CD4-positive, alpha-beta T cell (primary cell): ENCODE measurements at regions of chr17 and their contacts with region 1.

Region 1: GRCh38 chr17:40139566-40140058 is 725 bp upstream of the CASC3 start:
- DNase-seq: peak in 2 of 14 experiments; percentile 4
- ATAC-seq: peak; percentile 21
- H3K4me3 ChIP-seq: peak overlapping the region; percentile 59
- H3K4me3 Mint-ChIP-seq: peak overlapping the region; percentile 95
- H3K27ac ChIP-seq: peak overlapping the region; percentile 91 to 93
- H3K27ac Mint-ChIP-seq: peak overlapping the region; percentile 99
- H3K4me1 ChIP-seq: peaks cover 38% of the 10 kb centered on the region
- H3K4me1 Mint-ChIP-seq: peaks cover 46% of the 10 kb centered on the region
- H3K27me3 ChIP-seq: no peaks in the 10 kb centered on the region
- H3K27me3 Mint-ChIP-seq: peaks cover 5% of the 10 kb centered on the region
- CTCF ChIP-seq: no peak

Region 2: DNA sequence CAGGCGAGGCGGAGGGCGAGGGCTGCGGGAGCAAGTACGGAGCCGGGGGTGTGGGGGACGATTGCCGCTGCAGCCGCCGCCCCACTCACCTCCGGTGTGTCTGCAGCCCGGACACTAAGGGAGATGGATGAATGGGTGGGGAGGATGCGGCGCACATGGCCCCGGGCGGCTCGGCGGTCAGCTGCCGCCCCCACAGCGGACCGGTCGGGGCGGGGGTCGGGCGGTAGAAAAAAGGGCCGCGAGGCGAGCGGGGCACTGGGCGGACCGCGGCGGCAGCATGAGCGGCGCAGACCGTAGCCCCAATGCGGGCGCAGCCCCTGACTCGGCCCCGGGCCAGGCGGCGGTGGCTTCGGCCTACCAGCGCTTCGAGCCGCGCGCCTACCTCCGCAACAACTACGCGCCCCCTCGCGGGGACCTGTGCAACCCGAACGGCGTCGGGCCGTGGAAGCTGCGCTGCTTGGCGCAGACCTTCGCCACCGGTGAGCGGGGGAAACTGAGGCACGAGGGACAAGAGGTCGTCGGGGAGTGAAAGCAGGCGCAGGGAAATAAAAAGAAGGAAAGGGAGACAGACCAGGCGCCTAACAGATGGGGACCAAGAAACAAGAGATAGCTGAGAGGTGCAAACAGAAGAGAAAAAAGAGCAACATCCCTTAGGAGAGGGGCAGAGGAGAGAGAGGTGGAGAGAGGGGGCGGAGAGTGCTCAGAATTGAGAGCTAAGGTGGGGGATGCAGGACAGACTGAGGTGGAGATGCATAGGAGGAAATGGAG is 471.2 kb before region 1 on chr17 and contains the start of gene PNMT:
- CTCF ChIA-PET with region 1: no interaction called
- POLR2A ChIA-PET with region 1: no interaction called
- intact Hi-C with region 1: no loop called
- DNase-seq: peak; percentile 42 to 85 (median 62)
- ATAC-seq: peak; percentile 80
- H3K4me3 ChIP-seq: peak within 1 kb of the TSS; percentile 32
- H3K4me3 Mint-ChIP-seq: peak within 1 kb of the TSS; percentile 59
- H3K27ac ChIP-seq: no peak within 1 kb of the TSS
- H3K27ac Mint-ChIP-seq: no peak within 1 kb of the TSS
- H3K4me1 ChIP-seq: peaks cover 35% of the 10 kb centered on the region
- H3K4me1 Mint-ChIP-seq: peaks cover 15% of the 10 kb centered on the region
- H3K27me3 ChIP-seq: peaks cover 15 to 34% of the 10 kb centered on the region in 2 experiments
- H3K27me3 Mint-ChIP-seq: peaks cover 34% of the 10 kb centered on the region
- CTCF ChIP-seq: peak; percentile 78
- total RNA-seq, gene PNMT: 0.47 TPM in 1 of 2 experiments, not detected in the other

Region 3: GRCh38 chr17:39980351-39981206 is 159.0 kb before region 1 on chr17 and contains the start of gene PSMD3:
- CTCF ChIA-PET with region 1: no interaction called
- POLR2A ChIA-PET with region 1: interaction called, 11 read pairs
- intact Hi-C with region 1: no loop called
- DNase-seq: peak; percentile 95 to 100 (median 98)
- ATAC-seq: peak; percentile 94
- H3K4me3 ChIP-seq: peak within 1 kb of the TSS; percentile 96
- H3K4me3 Mint-ChIP-seq: peak within 1 kb of the TSS; percentile 89
- H3K27ac ChIP-seq: peak within 1 kb of the TSS; percentile 89 to 97
- H3K27ac Mint-ChIP-seq: peak within 1 kb of the TSS; percentile 95
- H3K4me1 ChIP-seq: peaks cover 25% of the 10 kb centered on the region
- H3K4me1 Mint-ChIP-seq: peaks cover 39% of the 10 kb centered on the region
- H3K27me3 ChIP-seq: no peaks in the 10 kb centered on the region
- H3K27me3 Mint-ChIP-seq: no peaks in the 10 kb centered on the region
- CTCF ChIP-seq: peak; percentile 70
- total RNA-seq, gene PSMD3: 66.7 to 71.9 TPM

Region 4: DNA sequence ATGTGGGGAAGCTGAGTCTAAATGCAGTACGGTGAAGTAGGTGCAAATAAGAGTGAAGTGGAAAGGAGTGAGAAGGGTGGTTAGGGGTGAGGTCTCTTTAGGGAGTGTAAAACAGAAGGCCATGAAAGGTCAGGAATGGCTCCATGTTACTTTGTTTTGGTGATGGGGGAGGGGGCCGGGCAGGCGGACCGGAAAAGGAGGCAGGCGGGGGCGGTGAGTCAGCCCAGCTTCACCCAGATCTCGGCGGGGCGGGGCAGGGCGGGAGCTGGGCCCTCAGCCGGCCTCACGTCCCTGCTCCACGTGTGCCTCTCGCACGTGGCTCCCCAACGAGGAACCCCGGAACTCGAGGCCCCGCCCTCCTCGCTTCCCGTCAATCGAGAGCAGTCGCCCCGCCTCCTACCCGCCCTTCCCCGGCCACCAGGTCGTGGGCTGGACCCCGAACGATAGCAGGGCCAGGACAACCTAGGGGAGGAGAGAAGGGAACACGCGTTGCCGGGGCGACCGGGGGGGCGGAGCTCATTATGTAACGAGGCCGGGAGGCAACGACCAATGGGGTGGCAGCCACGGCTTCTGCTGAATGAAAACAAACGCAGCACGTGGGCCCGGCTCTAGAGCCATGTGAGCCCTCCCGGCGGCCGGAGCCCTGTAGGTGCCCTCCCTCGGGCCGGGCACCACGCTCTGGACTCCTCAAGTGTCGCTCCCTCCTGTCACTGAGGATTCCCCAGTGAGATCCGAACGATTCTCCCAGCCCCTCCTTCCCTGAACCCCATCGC is 40.6 kb before region 1 on chr17:
- CTCF ChIA-PET with region 1: no interaction called
- POLR2A ChIA-PET with region 1: interaction called, 28 read pairs
- intact Hi-C with region 1: loop called (anchors 1 to 2 kb)
- DNase-seq: peak; percentile 99 to 100 (median 99)
- ATAC-seq: peak; percentile 63
- H3K4me3 ChIP-seq: peak overlapping the region; percentile 85
- H3K4me3 Mint-ChIP-seq: peak overlapping the region; percentile 97
- H3K27ac ChIP-seq: peak overlapping the region; percentile 94 to 96
- H3K27ac Mint-ChIP-seq: peak overlapping the region; percentile 91
- H3K4me1 ChIP-seq: peaks cover 97% of the 10 kb centered on the region
- H3K4me1 Mint-ChIP-seq: peaks cover 90% of the 10 kb centered on the region
- H3K27me3 ChIP-seq: no peaks in the 10 kb centered on the region
- H3K27me3 Mint-ChIP-seq: no peaks in the 10 kb centered on the region
- CTCF ChIP-seq: no peak

Region 5: GRCh38 chr17:40153603-40154236 is 14.1 kb after region 1 on chr17:
- CTCF ChIA-PET with region 1: no interaction called
- POLR2A ChIA-PET with region 1: interaction called, 12 read pairs
- intact Hi-C with region 1: no loop called
- DNase-seq: no peak
- ATAC-seq: no peak
- H3K4me3 ChIP-seq: no peak overlapping the region
- H3K4me3 Mint-ChIP-seq: no peak overlapping the region
- H3K27ac ChIP-seq: no peak overlapping the region
- H3K27ac Mint-ChIP-seq: no peak overlapping the region
- H3K4me1 ChIP-seq: peaks cover 20% of the 10 kb centered on the region
- H3K4me1 Mint-ChIP-seq: peaks cover 55% of the 10 kb centered on the region
- H3K27me3 ChIP-seq: no peaks in the 10 kb centered on the region
- H3K27me3 Mint-ChIP-seq: no peaks in the 10 kb centered on the region
- CTCF ChIP-seq: no peak

Region 6: DNA sequence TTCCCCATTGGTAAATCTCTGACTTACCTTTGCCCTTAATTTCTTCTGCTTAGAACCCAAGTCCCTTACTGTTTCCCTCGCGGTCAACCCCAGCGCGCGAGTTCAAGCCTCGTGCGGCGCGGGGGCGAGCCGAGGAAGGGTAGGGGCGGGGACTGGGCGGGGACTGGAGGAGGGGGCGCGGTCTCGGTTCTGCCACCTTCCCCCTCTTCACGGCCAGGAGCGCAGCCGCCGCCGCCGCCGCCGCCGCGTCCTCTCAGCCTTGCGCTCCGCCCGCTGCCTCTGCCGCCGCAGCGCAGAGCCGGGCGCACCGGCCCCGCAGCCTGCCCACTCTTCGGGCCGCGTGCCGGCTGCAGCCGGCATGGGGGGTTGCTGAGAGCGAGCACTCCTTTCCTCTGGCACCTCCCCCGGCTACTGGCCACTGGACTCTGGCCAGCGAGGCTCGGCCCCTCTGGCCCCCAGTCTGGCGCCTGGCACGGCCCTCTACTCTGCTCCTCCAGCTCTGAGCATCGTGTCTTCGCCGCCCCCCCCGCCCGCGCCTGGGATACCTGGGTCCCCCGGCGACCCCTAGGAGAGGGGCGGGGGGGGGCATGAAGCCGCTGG is 37.8 kb after region 1 on chr17 and contains the start of gene RAPGEFL1:
- CTCF ChIA-PET with region 1: no interaction called
- POLR2A ChIA-PET with region 1: interaction called, 4 read pairs
- intact Hi-C with region 1: loop called in 1 of 2 experiments (anchors 5 kb)
- DNase-seq: peak; percentile 72 to 94 (median 83)
- ATAC-seq: peak; percentile 97
- H3K4me3 ChIP-seq: peak within 1 kb of the TSS; percentile 58
- H3K4me3 Mint-ChIP-seq: peak within 1 kb of the TSS; percentile 67
- H3K27ac ChIP-seq: no peak within 1 kb of the TSS
- H3K27ac Mint-ChIP-seq: no peak within 1 kb of the TSS
- H3K4me1 ChIP-seq: peaks cover 20% of the 10 kb centered on the region
- H3K4me1 Mint-ChIP-seq: peaks cover 9% of the 10 kb centered on the region
- H3K27me3 ChIP-seq: no peaks in the 10 kb centered on the region
- H3K27me3 Mint-ChIP-seq: no peaks in the 10 kb centered on the region
- CTCF ChIP-seq: no peak
- total RNA-seq, gene RAPGEFL1: 7.7 to 9.4 TPM